ENCODE measurements at regions of chr5 and their contacts with region 1.

Region 1: DNA sequence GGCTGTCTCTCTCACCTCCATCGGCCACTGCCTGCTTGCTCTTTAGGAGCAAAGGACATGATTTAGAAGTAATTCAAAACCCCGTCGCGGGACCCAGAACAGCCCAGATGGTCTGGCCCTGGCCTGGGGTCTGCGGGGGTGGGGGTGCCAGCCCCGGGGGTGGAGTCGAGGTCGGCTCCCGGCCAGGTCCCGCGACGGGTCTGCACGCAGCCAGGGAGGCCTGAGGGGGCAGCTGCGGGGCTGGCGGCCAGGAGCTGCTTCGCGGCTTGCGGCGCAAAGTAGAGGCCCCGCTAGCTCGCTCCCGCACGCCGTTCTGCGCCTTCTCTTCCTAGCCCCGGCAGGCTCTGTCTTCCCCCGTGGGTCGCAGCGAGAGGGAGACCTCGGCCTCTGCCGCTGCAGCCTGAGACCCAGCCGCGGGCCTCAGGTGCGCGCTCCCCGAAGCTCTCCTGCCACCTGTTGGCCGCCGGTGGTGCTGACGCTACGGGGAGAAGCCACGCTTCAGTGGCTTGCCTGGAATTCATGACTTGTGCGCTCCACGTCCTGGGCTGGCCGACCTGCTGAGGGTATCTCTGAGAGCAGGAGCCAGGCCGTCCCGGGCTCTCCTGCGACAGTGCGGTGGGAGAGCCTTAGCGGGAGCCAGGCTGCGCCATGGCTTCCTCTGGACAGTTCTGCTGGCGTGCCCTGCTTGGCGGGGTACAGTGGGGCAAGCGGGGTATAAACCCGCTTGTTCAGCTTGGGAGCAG is 157.2 kb upstream of the PITX1 start:
- DNase-seq: peak; percentile 72 to 79 (median 78)
- ATAC-seq: peak; percentile 95
- H3K4me3 ChIP-seq: peak overlapping the region in 1 of 2 donors; percentile 39
- H3K27ac ChIP-seq: no peak overlapping the region
- H3K4me1 ChIP-seq: peaks cover 5% of the 10 kb centered on the region
- H3K27me3 ChIP-seq: no peaks in the 10 kb centered on the region
- CTCF ChIP-seq: peak; percentile 85 to 94 (median 92)
- POLR2A ChIP-seq: no peak

Region 2: GRCh38 chr5:134917070-134917815 is 274.0 kb before region 1 on chr5:
- intact Hi-C with region 1: loop called (anchors 10 kb)
- DNase-seq: peak in 1 of 4 donors; percentile 12
- ATAC-seq: no peak
- H3K4me3 ChIP-seq: no peak overlapping the region
- H3K27ac ChIP-seq: no peak overlapping the region
- H3K4me1 ChIP-seq: peaks cover 13% of the 10 kb centered on the region
- H3K27me3 ChIP-seq: no peaks in the 10 kb centered on the region
- CTCF ChIP-seq: peak in 2 of 7 experiments; percentile 14 to 31
- POLR2A ChIP-seq: no peak

Region 3: DNA sequence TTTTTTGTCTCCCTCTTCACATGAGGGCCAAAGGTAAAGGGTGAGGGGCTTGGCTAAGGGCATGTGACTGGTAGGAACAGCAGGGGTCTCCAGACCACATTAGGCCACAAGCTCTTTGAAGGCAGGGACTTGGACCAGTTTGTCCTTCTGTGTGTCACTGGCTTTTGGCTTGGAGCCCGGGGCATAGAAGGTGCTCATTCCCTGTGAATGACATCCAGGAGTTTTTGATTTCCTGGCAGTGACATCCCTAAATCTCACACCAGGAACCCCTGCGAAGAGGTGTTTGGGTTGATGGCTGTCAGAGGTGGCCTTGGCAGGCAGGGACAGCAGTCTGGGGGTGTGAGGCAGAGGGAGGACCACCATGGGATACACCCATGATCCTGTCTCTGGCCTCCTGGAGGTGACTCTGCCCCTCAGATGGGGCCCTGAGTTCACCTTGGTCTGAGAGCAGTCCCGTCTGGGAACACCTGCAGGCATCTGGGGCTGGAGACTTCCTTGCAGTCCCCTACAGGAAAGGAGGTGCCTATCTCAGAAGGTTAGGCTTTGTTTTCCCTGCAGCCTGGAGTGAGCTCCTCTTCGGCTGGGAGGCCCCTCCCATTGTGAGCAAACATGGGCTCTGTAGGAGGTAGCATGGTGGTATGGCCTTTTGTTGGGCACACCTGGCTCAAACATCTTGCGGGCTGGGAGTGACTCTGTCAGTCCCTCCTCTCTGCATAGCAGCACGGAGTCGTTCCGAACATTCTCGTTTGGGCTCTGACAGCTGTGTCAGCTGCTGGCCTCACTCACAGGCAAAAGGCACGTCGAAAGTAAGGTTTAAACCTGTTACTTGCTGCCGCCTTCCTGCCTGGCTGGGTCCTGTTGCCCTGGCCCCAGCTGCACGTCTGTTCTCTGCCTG is 118.6 kb before region 1 on chr5:
- intact Hi-C with region 1: no loop called
- DNase-seq: no peak
- ATAC-seq: no peak
- H3K4me3 ChIP-seq: no peak overlapping the region
- H3K27ac ChIP-seq: no peak overlapping the region
- H3K4me1 ChIP-seq: no peaks in the 10 kb centered on the region
- H3K27me3 ChIP-seq: no peaks in the 10 kb centered on the region
- CTCF ChIP-seq: no peak
- POLR2A ChIP-seq: no peak